ENCODE measurements at regions of chr3 and their contacts with region 1.

Region 1: DNA sequence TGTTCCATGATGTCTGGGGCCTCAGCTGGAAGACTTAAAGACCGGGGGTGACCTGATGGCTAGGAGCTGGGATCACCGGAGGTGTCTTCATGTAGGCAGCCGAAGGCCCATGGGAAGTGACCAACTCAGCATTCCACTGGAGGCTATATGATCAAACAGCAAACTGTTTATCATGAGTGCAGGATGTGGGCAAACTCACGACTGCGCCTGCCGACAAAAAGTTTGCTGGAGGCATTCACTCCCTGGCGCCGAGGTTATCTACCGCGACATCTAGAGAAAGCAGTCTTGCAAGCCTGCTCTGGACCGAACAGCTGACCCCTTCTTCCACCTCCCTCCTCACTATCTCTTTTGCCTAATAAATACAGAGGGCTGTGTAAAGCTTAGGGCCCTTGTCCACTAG is 62.7 kb upstream of the NR2C2 start:
- DNase-seq: peak in 8 of 9 donors; percentile 18 to 50 (median 24)
- ATAC-seq: no peak
- H3K4me3 ChIP-seq: no peak overlapping the region
- H3K4me3 Mint-ChIP-seq: peak overlapping the region; percentile 62 to 77 (median 70)
- H3K27ac ChIP-seq: peak overlapping the region; percentile 19
- H3K27ac Mint-ChIP-seq: peak overlapping the region; percentile 54 to 95 (median 84)
- H3K4me1 ChIP-seq: peaks cover 5 to 61% of the 10 kb centered on the region in 2 donors
- H3K4me1 Mint-ChIP-seq: peaks cover 35 to 68% (median 60%) of the 10 kb centered on the region in 7 donors
- H3K27me3 ChIP-seq: no peaks in the 10 kb centered on the region
- H3K27me3 Mint-ChIP-seq: peaks cover 0 to 13% (median 0%) of the 10 kb centered on the region in 5 donors

Region 2: GRCh38 chr3:14847613-14848541 is 36.8 kb before region 1 on chr3:
- CTCF ChIA-PET with region 1: interaction called, 3 read pairs
- POLR2A ChIA-PET with region 1: no interaction called
- intact Hi-C with region 1: loop called in 1 of 2 experiments (anchors 5 kb)
- DNase-seq: no peak
- ATAC-seq: no peak
- H3K4me3 ChIP-seq: no peak overlapping the region
- H3K4me3 Mint-ChIP-seq: peak overlapping the region in 1 of 10 donors; percentile 20
- H3K27ac ChIP-seq: no peak overlapping the region
- H3K27ac Mint-ChIP-seq: peak overlapping the region in 3 of 9 donors; percentile 55 to 72 (median 61)
- H3K4me1 ChIP-seq: no peaks in the 10 kb centered on the region
- H3K4me1 Mint-ChIP-seq: peaks cover 0 to 40% (median 11%) of the 10 kb centered on the region in 7 donors
- H3K27me3 ChIP-seq: no peaks in the 10 kb centered on the region
- H3K27me3 Mint-ChIP-seq: peaks cover 0 to 15% (median 0%) of the 10 kb centered on the region in 5 donors

Region 3: DNA sequence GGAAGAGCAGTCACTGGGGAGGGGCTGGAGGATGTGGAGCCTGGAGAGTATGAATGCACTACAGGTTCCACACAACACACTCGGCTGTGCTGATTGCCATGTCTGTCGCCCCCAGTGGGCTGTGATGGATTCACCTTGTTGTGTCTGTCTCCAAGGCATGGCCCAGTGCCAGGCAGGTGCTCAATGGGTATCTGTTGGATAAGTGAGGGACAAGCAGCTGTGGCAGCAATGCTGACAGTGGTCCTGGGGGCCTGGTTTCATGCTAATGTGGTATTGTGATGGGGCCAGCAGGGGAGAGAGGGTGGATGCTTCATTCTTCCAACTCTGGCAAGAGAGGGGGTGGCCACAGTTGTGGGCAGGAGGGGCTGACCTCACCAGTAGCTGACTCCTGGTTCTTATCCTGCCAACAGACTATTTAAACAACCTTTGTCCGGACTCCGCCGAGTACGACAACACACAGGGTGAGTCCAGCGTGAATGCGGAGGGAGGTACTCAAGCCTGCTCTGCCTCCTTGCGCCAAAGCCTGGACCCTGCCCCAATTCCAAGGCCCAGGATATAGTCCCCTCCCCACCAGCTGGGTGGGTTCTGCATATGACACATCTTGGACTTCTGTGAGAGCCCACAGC is 15.4 kb after region 1 on chr3:
- CTCF ChIA-PET with region 1: interaction called, 6 read pairs
- POLR2A ChIA-PET with region 1: interaction called, 5 read pairs
- intact Hi-C with region 1: loop called in 1 of 2 experiments (anchors 2 kb)
- DNase-seq: no peak
- ATAC-seq: no peak
- H3K4me3 ChIP-seq: no peak overlapping the region
- H3K4me3 Mint-ChIP-seq: no peak overlapping the region
- H3K27ac ChIP-seq: no peak overlapping the region
- H3K27ac Mint-ChIP-seq: no peak overlapping the region
- H3K4me1 ChIP-seq: no peaks in the 10 kb centered on the region
- H3K4me1 Mint-ChIP-seq: peaks cover 0 to 5% (median 0%) of the 10 kb centered on the region in 7 donors
- H3K27me3 ChIP-seq: no peaks in the 10 kb centered on the region
- H3K27me3 Mint-ChIP-seq: peaks cover 0 to 39% (median 6%) of the 10 kb centered on the region in 5 donors